ENCODE measurements at regions of chr10 and their contacts with region 1.

Region 1: GRCh38 chr10:115706026-115706781 is 566.8 kb downstream of the GFRA1 start:
- DNase-seq: no peak
- ATAC-seq: no peak
- H3K4me3 ChIP-seq: no peak overlapping the region
- H3K4me3 Mint-ChIP-seq: no peak overlapping the region
- H3K27ac ChIP-seq: no peak overlapping the region
- H3K27ac Mint-ChIP-seq: no peak overlapping the region
- H3K4me1 ChIP-seq: no peaks in the 10 kb centered on the region
- H3K4me1 Mint-ChIP-seq: no peaks in the 10 kb centered on the region
- H3K27me3 ChIP-seq: no peaks in the 10 kb centered on the region
- H3K27me3 Mint-ChIP-seq: no peaks in the 10 kb centered on the region

Region 2: GRCh38 chr10:116287906-116288501 is 581.8 kb after region 1 on chr10:
- CTCF ChIA-PET with region 1: no interaction called
- POLR2A ChIA-PET with region 1: no interaction called
- intact Hi-C with region 1: loop called in 1 of 2 experiments (anchors 5 kb)
- DNase-seq: no peak
- ATAC-seq: no peak
- H3K4me3 ChIP-seq: no peak overlapping the region
- H3K4me3 Mint-ChIP-seq: no peak overlapping the region
- H3K27ac ChIP-seq: no peak overlapping the region
- H3K27ac Mint-ChIP-seq: no peak overlapping the region
- H3K4me1 ChIP-seq: no peaks in the 10 kb centered on the region
- H3K4me1 Mint-ChIP-seq: peaks cover 0 to 2% (median 0%) of the 10 kb centered on the region in 7 donors
- H3K27me3 ChIP-seq: no peaks in the 10 kb centered on the region
- H3K27me3 Mint-ChIP-seq: peaks cover 0 to 16% (median 6%) of the 10 kb centered on the region in 5 donors

Region 3: DNA sequence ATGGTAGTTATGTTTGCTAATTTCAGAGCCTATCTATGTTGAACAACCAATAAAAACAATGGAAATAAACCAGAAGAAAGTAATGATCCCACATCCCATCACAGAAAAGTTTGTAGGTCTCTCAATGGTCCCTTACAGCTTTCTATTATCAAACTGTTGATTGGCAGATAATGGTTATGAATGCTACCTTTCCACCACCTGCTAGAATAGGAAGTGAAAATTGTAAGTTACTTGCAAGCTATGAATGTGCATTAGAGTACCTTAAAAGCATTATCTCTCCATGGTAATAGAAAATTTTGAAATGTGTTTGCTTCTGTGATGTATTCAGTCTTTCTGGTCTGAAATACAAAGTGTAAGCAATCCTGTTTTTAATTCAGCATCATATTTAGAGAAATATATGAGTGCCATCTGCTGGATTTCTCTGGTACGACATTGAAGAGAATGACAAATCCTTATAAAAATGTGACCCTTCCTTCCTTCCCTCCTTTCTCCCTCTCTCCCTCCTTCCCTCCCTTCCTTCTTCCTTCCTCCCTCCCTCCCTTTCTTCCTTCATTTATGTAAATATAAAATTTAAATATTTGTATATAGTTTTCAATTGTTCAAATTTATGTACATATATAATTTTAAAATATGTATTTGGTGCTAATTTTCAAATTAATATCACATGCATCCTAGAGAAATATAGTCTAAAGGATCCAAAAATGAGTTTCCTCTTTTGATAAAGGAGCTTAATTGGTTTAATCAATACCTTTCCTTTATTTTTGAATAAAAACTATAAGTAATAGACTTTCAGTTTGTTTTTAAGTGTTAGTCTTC is 680.0 kb after region 1 on chr10:
- CTCF ChIA-PET with region 1: no interaction called
- POLR2A ChIA-PET with region 1: no interaction called
- intact Hi-C with region 1: loop called in 1 of 2 experiments (anchors 5 kb)
- DNase-seq: peak in 3 of 9 donors; percentile 1 to 13 (median 5)
- ATAC-seq: no peak
- H3K4me3 ChIP-seq: no peak overlapping the region
- H3K4me3 Mint-ChIP-seq: no peak overlapping the region
- H3K27ac ChIP-seq: no peak overlapping the region
- H3K27ac Mint-ChIP-seq: no peak overlapping the region
- H3K4me1 ChIP-seq: no peaks in the 10 kb centered on the region
- H3K4me1 Mint-ChIP-seq: no peaks in the 10 kb centered on the region
- H3K27me3 ChIP-seq: peaks cover 0 to 2% of the 10 kb centered on the region in 2 donors
- H3K27me3 Mint-ChIP-seq: peaks cover 0 to 9% (median 4%) of the 10 kb centered on the region in 5 donors

Region 4: DNA sequence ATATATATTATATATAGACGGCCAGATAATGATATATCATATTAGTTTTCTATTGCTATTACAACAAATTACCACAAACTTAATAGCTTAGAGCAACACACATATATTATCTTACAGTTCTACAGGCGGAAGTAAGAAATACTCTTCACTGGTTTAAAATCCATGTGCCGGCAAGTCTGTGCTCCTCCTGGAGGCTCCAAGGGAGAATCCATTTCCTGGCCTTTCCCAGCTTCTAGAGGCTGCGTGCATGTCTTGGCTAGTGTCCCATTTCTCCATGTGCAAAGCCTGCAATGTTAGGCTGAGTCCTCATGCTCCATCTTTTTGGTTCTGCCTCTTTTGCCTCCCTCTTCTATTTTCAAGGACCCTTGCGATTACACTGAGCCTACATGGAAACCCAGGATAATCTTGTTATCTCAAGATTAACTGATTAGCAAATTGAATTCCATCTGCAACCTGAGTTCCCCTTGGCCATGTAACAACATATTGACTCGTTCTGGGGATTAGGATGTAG is 697.6 kb after region 1 on chr10:
- CTCF ChIA-PET with region 1: no interaction called
- POLR2A ChIA-PET with region 1: no interaction called
- intact Hi-C with region 1: no loop called
- DNase-seq: no peak
- ATAC-seq: no peak
- H3K4me3 ChIP-seq: no peak overlapping the region
- H3K4me3 Mint-ChIP-seq: no peak overlapping the region
- H3K27ac ChIP-seq: no peak overlapping the region
- H3K27ac Mint-ChIP-seq: no peak overlapping the region
- H3K4me1 ChIP-seq: no peaks in the 10 kb centered on the region
- H3K4me1 Mint-ChIP-seq: no peaks in the 10 kb centered on the region
- H3K27me3 ChIP-seq: no peaks in the 10 kb centered on the region
- H3K27me3 Mint-ChIP-seq: peaks cover 0 to 9% (median 0%) of the 10 kb centered on the region in 5 donors

Measured in naive thymus-derived CD4-positive, alpha-beta T cell (primary cell).